Naive thymus-derived CD4-positive, alpha-beta T cell (primary cell): ENCODE measurements at regions of chr5 and their contacts with region 1.

Region 1: DNA sequence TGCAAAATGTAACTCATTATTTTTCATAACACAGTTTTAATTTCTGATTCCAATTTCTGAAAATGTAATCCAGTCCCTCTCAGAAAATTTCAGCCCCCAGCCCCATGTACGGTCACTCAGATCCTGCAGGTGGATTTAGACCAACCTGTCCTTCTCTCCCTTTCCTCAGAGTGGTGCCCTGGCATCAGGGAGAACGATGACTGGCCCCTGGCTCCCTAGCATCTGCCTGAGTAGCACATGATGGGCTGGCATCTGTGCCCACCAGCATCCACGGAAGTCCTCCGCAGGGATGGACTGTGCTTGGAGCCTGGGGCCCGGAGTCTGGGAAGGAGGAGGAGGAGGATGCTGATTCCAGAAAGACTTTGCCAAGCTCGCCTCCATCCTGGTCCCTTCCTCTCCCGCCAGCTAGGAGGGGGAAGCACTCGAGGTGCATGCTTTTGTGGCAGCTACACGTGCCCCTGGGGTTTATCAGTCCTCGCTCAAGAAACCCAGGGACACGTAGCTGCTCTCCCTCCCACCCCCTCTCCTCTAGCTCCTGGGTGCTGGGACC is 54.4 kb upstream of the RUFY1 start:
- DNase-seq: no peak
- ATAC-seq: no peak
- H3K4me3 ChIP-seq: no peak overlapping the region
- H3K4me3 Mint-ChIP-seq: no peak overlapping the region
- H3K27ac ChIP-seq: no peak overlapping the region
- H3K27ac Mint-ChIP-seq: no peak overlapping the region
- H3K4me1 ChIP-seq: no peaks in the 10 kb centered on the region
- H3K4me1 Mint-ChIP-seq: peaks cover 0 to 1% (median 0%) of the 10 kb centered on the region in 7 donors
- H3K27me3 ChIP-seq: no peaks in the 10 kb centered on the region
- H3K27me3 Mint-ChIP-seq: peaks cover 0 to 5% (median 0%) of the 10 kb centered on the region in 5 donors

Region 2: DNA sequence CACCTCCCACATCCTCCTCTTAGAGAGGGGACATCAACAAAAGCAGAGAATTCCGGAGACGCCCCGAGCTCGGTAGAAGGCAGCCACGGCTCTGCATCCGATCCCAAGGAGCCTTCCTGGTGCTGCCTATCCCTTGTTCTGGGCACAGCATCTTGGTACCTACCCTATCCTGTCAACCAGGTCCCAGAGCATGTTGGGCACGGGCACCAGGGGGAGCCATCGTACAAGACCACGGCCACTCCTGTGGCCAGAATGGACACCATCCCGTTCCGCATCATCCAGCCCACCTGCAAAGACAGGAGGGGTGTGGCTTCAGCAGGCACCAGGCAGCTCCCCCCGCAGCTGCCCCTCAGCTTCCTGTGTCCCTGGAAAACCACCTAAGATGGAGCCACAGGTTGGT is 702.8 kb before region 1 on chr5:
- CTCF ChIA-PET with region 1: no interaction called
- POLR2A ChIA-PET with region 1: no interaction called
- intact Hi-C with region 1: loop called in 1 of 2 experiments (anchors 10 kb)
- DNase-seq: peak in 1 of 9 donors; percentile 23
- ATAC-seq: no peak
- H3K4me3 ChIP-seq: no peak overlapping the region
- H3K4me3 Mint-ChIP-seq: no peak overlapping the region
- H3K27ac ChIP-seq: no peak overlapping the region
- H3K27ac Mint-ChIP-seq: no peak overlapping the region
- H3K4me1 ChIP-seq: no peaks in the 10 kb centered on the region
- H3K4me1 Mint-ChIP-seq: peaks cover 0 to 5% (median 0%) of the 10 kb centered on the region in 7 donors
- H3K27me3 ChIP-seq: no peaks in the 10 kb centered on the region
- H3K27me3 Mint-ChIP-seq: peaks cover 0 to 10% (median 5%) of the 10 kb centered on the region in 5 donors

Region 3: GRCh38 chr5:179060116-179061008 is 435.6 kb before region 1 on chr5 and contains the start of gene ZNF354C:
- CTCF ChIA-PET with region 1: no interaction called
- POLR2A ChIA-PET with region 1: no interaction called
- intact Hi-C with region 1: loop called in 1 of 2 experiments (anchors 5 kb)
- DNase-seq: peak; percentile 77 to 87 (median 82)
- ATAC-seq: peak; percentile 98
- H3K4me3 ChIP-seq: peak within 1 kb of the TSS; percentile 73
- H3K4me3 Mint-ChIP-seq: peak within 1 kb of the TSS; percentile 89 to 99 (median 94)
- H3K27ac ChIP-seq: peak within 1 kb of the TSS; percentile 79
- H3K27ac Mint-ChIP-seq: peak within 1 kb of the TSS; percentile 82 to 96 (median 92)
- H3K4me1 ChIP-seq: peaks cover 0 to 9% of the 10 kb centered on the region in 2 donors
- H3K4me1 Mint-ChIP-seq: peaks cover 16 to 43% (median 32%) of the 10 kb centered on the region in 7 donors
- H3K27me3 ChIP-seq: no peaks in the 10 kb centered on the region
- H3K27me3 Mint-ChIP-seq: peaks cover 0 to 9% (median 5%) of the 10 kb centered on the region in 5 donors
- total RNA-seq, gene ZNF354C: 3.8 to 12.3 (median 5.2) TPM

Region 4: GRCh38 chr5:179166886-179167841 is 328.8 kb before region 1 on chr5:
- CTCF ChIA-PET with region 1: interaction called, 5 read pairs
- POLR2A ChIA-PET with region 1: no interaction called
- intact Hi-C with region 1: loop called in 1 of 2 experiments (anchors 1 kb)
- DNase-seq: peak; percentile 39 to 79 (median 64)
- ATAC-seq: peak; percentile 80
- H3K4me3 ChIP-seq: peak overlapping the region; percentile 4
- H3K4me3 Mint-ChIP-seq: peak overlapping the region in 9 of 10 donors; percentile 20 to 73 (median 56)
- H3K27ac ChIP-seq: no peak overlapping the region
- H3K27ac Mint-ChIP-seq: no peak overlapping the region
- H3K4me1 ChIP-seq: no peaks in the 10 kb centered on the region
- H3K4me1 Mint-ChIP-seq: peaks cover 0 to 7% (median 4%) of the 10 kb centered on the region in 7 donors
- H3K27me3 ChIP-seq: no peaks in the 10 kb centered on the region
- H3K27me3 Mint-ChIP-seq: peaks cover 0 to 5% (median 4%) of the 10 kb centered on the region in 5 donors

Region 5: GRCh38 chr5:179858586-179859427 is 362.8 kb after region 1 on chr5 and contains the start of gene MRNIP:
- CTCF ChIA-PET with region 1: no interaction called
- POLR2A ChIA-PET with region 1: no interaction called
- intact Hi-C with region 1: no loop called
- DNase-seq: peak; percentile 75 to 94 (median 85)
- ATAC-seq: peak; percentile 98
- H3K4me3 ChIP-seq: peak within 1 kb of the TSS; percentile 91
- H3K4me3 Mint-ChIP-seq: peak within 1 kb of the TSS; percentile 89 to 99 (median 96)
- H3K27ac ChIP-seq: peak within 1 kb of the TSS; percentile 77
- H3K27ac Mint-ChIP-seq: peak within 1 kb of the TSS; percentile 86 to 95 (median 88)
- H3K4me1 ChIP-seq: peaks cover 5 to 12% of the 10 kb centered on the region in 2 donors
- H3K4me1 Mint-ChIP-seq: peaks cover 8 to 35% (median 26%) of the 10 kb centered on the region in 7 donors
- H3K27me3 ChIP-seq: no peaks in the 10 kb centered on the region
- H3K27me3 Mint-ChIP-seq: no peaks in the 10 kb centered on the region
- total RNA-seq, gene MRNIP: 27.9 to 133 (median 43.3) TPM